ENCODE measurements at regions of chr7 and their contacts with region 1.

Region 1: GRCh38 chr7:131342864-131343442 is 15.3 kb downstream of the MKLN1 start:
- DNase-seq: no peak
- H3K4me3 Mint-ChIP-seq: no peak overlapping the region
- H3K27ac Mint-ChIP-seq: no peak overlapping the region
- H3K4me1 Mint-ChIP-seq: peaks cover 51% of the 10 kb centered on the region
- H3K27me3 Mint-ChIP-seq: no peaks in the 10 kb centered on the region

Region 2: GRCh38 chr7:131170440-131171105 is 172.4 kb before region 1 on chr7:
- CTCF ChIA-PET with region 1: no interaction called
- intact Hi-C with region 1: no loop called
- DNase-seq: no peak
- H3K4me3 Mint-ChIP-seq: no peak overlapping the region
- H3K27ac Mint-ChIP-seq: no peak overlapping the region
- H3K4me1 Mint-ChIP-seq: no peaks in the 10 kb centered on the region
- H3K27me3 Mint-ChIP-seq: no peaks in the 10 kb centered on the region

Region 3: DNA sequence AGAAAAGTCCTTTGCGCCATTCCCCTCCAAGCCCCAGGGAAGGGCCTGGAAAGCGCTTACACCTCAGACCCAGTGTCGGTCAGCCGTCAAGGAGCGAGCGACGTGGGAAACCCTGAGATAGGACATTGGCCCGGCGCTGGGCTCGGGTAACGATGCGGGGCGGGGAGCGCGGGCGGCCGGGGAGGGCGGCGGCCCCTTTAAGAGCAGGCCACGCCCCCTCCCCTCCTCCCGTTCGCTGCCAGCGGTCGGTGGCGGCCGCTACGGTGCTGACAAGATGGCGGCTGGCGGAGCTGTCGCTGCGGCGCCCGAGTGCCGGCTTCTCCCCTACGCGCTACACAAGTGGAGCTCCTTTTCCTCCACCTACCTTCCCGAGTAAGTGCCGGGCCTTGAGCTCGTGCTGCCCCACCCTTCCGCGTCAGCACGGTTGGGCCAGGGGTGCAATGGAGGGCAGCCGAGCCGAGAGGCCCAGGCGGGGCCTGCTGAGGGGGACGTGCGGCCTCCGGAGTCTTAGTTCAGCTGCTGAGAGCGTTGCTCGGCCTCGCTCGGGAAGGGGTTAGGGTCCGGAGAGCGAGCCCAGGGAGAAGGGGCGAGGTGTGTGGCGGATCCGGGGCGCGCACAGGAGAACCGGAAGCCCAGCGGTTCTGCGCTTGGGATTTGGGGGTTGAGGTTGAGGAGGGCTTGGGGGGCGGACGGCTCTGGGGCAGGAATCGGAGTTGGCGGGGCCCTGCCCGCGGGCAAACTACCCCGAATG is 15.2 kb before region 1 on chr7 and contains the start of gene MKLN1:
- CTCF ChIA-PET with region 1: no interaction called
- intact Hi-C with region 1: loop called (anchors 2 kb)
- DNase-seq: peak; percentile 90
- H3K4me3 Mint-ChIP-seq: peak within 1 kb of the TSS; percentile 98
- H3K27ac Mint-ChIP-seq: peak within 1 kb of the TSS; percentile 96
- H3K4me1 Mint-ChIP-seq: peaks cover 54% of the 10 kb centered on the region
- H3K27me3 Mint-ChIP-seq: no peaks in the 10 kb centered on the region
- total RNA-seq, gene MKLN1: 29.8 to 34.9 TPM